ENCODE measurements at regions of chr5 and their contacts with region 1.

Region 1: GRCh38 chr5:148826053-148826738 is at the start of gene ADRB2:
- H3K4me3 Mint-ChIP-seq: peak within 1 kb of the TSS; percentile 85
- H3K27ac Mint-ChIP-seq: peak within 1 kb of the TSS; percentile 90
- H3K4me1 Mint-ChIP-seq: peaks cover 72% of the 10 kb centered on the region
- H3K27me3 Mint-ChIP-seq: no peaks in the 10 kb centered on the region

Region 2: DNA sequence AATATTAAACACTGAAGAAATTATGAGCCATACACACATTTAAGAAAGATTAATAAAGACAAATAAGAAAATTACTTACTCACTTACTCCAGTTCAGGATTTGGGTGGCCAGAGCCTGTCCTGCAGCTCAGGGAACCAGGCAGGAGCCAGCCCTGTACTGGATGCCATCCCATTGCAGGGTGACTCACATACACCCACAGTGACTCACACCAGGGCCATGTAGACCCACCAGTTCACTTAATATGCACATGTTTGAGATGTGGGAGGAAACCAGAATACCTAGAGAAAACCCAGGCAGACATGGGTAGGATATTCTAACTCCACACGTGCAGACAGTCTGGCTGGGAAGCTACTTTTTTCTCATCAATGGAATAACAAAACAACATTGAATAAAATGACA is 49.4 kb before region 1 on chr5:
- intact Hi-C with region 1: no loop called
- H3K4me3 Mint-ChIP-seq: no peak overlapping the region
- H3K27ac Mint-ChIP-seq: no peak overlapping the region
- H3K4me1 Mint-ChIP-seq: peaks cover 43% of the 10 kb centered on the region
- H3K27me3 Mint-ChIP-seq: no peaks in the 10 kb centered on the region

Region 3: DNA sequence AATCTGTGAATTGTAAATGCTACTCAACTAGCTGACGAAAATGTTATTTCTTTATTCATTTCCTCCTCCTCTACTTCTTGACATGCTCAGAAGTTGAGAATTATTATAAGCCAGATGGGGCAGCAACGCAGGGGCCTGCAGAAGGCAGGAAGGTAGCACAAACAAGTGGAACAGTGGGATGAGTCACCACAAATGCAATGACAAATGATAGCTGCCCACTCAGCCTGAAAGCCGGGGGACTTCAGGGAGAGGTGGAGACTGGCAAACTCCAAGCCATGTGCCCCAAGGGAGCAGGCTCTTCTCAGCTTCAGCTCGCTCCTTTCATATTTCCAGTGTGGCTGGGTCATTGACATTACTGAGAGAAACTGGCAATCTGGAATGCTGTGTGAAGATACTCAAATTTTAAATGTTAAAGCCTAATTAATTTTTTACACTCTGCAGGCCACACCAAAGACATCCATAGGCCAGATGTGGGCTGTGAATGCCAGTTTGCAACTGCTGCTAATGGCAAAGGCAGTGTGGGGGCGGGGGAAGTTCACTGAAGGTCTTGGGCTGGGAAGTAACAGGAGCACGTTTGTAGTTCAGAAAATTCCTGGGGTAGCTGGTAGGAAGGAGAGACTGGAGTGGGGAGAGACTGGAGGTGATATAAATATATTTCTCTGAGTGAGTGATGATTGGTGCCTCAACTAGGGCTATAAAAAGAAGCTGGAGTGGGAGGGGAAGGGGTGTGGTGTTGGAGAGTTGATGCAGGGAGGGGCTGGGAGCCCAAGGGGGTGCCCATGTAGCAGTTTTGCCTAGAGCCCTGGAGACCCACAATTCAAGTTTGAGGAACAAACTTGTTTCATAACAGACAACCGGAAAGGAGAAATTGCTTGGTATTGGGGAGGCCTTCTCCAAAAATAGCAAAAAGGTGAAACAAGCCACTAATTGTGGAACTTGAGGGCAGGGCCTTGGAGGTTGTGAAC is 20.6 kb before region 1 on chr5:
- intact Hi-C with region 1: loop called (anchors 2 kb)
- H3K4me3 Mint-ChIP-seq: no peak overlapping the region
- H3K27ac Mint-ChIP-seq: peak overlapping the region; percentile 85
- H3K4me1 Mint-ChIP-seq: peaks cover 85% of the 10 kb centered on the region
- H3K27me3 Mint-ChIP-seq: no peaks in the 10 kb centered on the region

Region 4: GRCh38 chr5:148963664-148964063 is 137.5 kb after region 1 on chr5:
- intact Hi-C with region 1: loop called (anchors 5 kb)
- H3K4me3 Mint-ChIP-seq: no peak overlapping the region
- H3K27ac Mint-ChIP-seq: peak overlapping the region; percentile 48
- H3K4me1 Mint-ChIP-seq: peaks cover 20% of the 10 kb centered on the region
- H3K27me3 Mint-ChIP-seq: peaks cover 2% of the 10 kb centered on the region